Activated CD4-positive, alpha-beta T cell treated with anti-CD3 and anti-CD28 coated beads for 36 hours (primary cell): ENCODE measurements at regions of chr1 and their contacts with region 1.

Region 1: GRCh38 chr1:66924756-66925557 is at the starts of genes DNAI4 and MIER1:
- DNase-seq: peak; percentile 99
- ATAC-seq: peak; percentile 94
- H3K4me3 Mint-ChIP-seq: peak within 1 kb of the TSS; percentile 93
- H3K27ac Mint-ChIP-seq: peak within 1 kb of the TSS; percentile 92
- H3K4me1 Mint-ChIP-seq: peaks cover 52% of the 10 kb centered on the region
- H3K27me3 Mint-ChIP-seq: no peaks in the 10 kb centered on the region
- total RNA-seq, gene DNAI4: 0.87 to 3.6 TPM
- total RNA-seq, gene MIER1: 49.7 to 51.5 TPM

Region 2: GRCh38 chr1:65265651-65266351 is 1659.2 kb before region 1 on chr1:
- CTCF ChIA-PET with region 1: no interaction called
- POLR2A ChIA-PET with region 1: no interaction called
- intact Hi-C with region 1: loop called in 1 of 2 experiments (anchors 10 kb)
- DNase-seq: peak; percentile 49
- ATAC-seq: peak; percentile 31
- H3K4me3 Mint-ChIP-seq: peak overlapping the region; percentile 55
- H3K27ac Mint-ChIP-seq: peak overlapping the region; percentile 51
- H3K4me1 Mint-ChIP-seq: peaks cover 23% of the 10 kb centered on the region
- H3K27me3 Mint-ChIP-seq: peaks cover 27% of the 10 kb centered on the region

Region 3: DNA sequence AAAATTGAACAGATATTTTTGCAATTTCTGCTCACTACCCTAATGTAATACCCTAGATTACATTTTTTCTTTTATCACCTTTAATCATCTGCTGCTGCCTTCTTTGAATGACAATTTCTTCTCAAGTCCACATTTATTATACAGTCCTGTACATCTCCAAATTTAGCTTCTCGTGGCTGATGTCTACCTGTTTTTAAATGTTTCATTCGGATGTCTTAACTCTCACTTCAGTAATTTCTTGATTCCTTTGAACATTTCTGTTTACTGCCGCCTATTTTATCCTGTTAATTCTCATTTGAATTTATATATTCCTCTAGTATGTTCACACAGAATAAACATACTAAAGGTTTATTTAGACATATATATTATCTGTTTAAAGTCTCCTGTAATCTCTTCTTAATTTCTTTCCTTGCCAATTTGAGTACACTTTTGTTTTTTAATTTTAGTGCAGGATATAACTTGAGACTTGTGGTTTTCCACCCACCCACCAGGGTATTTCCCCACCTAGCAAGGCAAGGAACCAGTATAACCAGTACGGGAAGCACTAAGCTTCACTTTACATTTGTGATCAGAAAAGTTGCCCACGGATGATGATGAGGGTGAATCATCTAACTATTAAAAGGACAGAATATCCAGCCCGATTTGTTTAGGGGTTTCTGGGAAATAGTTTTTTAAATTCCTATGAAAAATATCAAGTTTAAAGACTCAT is 136.6 kb before region 1 on chr1:
- CTCF ChIA-PET with region 1: interaction called, 3 read pairs
- POLR2A ChIA-PET with region 1: no interaction called
- intact Hi-C with region 1: loop called (anchors 5 kb)
- DNase-seq: peak; percentile 81
- ATAC-seq: peak; percentile 99
- H3K4me3 Mint-ChIP-seq: peak overlapping the region; percentile 54
- H3K27ac Mint-ChIP-seq: peak overlapping the region; percentile 49
- H3K4me1 Mint-ChIP-seq: peaks cover 25% of the 10 kb centered on the region
- H3K27me3 Mint-ChIP-seq: no peaks in the 10 kb centered on the region

Region 4: GRCh38 chr1:66944330-66945274 is 19.6 kb after region 1 on chr1:
- CTCF ChIA-PET with region 1: no interaction called
- POLR2A ChIA-PET with region 1: no interaction called
- intact Hi-C with region 1: no loop called
- DNase-seq: no peak
- ATAC-seq: no peak
- H3K4me3 Mint-ChIP-seq: no peak overlapping the region
- H3K27ac Mint-ChIP-seq: no peak overlapping the region
- H3K4me1 Mint-ChIP-seq: peaks cover 51% of the 10 kb centered on the region
- H3K27me3 Mint-ChIP-seq: no peaks in the 10 kb centered on the region

Region 5: DNA sequence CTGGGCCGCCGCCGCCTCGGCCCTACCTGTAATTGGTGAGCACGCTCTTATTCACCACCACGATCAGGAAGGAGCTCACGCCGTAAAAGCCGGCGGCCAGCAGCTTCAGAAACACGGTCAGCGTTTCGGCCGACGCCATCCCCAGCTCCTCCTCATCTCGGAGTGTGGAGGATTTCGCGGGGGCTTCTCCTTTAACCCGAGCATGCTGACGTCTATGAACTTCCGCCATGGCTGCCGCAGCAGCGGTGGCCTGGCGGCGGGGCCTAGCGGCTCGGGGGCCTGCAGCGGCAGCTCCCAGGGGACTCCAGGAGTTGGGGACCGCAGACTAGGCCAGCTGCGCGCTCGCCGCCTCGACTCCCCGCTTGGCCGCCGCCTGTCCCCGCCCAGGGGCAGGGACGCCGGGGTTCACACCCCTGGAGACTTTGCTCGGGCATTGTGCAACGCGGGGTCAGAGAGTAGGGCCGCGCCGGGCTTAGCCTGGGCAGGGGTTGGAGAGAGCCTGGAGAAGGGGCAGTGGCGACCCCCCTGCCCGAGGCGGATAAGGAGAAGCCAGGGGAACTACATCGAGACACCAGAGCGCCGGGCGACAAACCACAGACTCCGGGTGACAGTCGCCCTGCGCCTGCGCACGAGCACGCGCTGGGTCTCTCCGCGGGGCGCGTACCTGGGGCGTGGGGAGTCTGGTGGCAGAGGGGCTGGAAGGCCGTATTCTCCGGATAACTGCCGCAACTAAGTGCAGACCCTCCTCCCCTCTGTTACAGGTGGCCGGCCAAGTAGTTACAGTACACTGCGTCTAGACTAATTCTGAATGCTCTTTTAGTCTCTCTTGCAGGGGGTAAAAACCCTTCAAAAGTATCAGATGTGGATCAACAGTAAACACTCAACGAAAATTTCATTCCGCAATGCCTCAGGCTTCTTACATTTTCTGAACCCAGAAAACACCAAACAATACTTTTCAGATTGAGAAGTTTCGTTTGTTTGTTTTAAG is 129.1 kb after region 1 on chr1 and contains the start of gene SLC35D1:
- CTCF ChIA-PET with region 1: no interaction called
- POLR2A ChIA-PET with region 1: no interaction called
- intact Hi-C with region 1: loop called (anchors 2 kb)
- DNase-seq: peak; percentile 77
- ATAC-seq: peak; percentile 79
- H3K4me3 Mint-ChIP-seq: peak within 1 kb of the TSS; percentile 79
- H3K27ac Mint-ChIP-seq: peak within 1 kb of the TSS; percentile 91
- H3K4me1 Mint-ChIP-seq: peaks cover 26% of the 10 kb centered on the region
- H3K27me3 Mint-ChIP-seq: peaks cover 5% of the 10 kb centered on the region
- total RNA-seq, gene SLC35D1: 8.7 to 10.3 TPM

Region 6: GRCh38 chr1:67174716-67175284 is 249.8 kb after region 1 on chr1:
- CTCF ChIA-PET with region 1: interaction called, 4 read pairs
- POLR2A ChIA-PET with region 1: no interaction called
- intact Hi-C with region 1: loop called in 1 of 2 experiments (anchors 5 kb)
- DNase-seq: peak; percentile 61
- ATAC-seq: peak; percentile 70
- H3K4me3 Mint-ChIP-seq: peak overlapping the region; percentile 25
- H3K27ac Mint-ChIP-seq: peak overlapping the region; percentile 94
- H3K4me1 Mint-ChIP-seq: peaks cover 68% of the 10 kb centered on the region
- H3K27me3 Mint-ChIP-seq: no peaks in the 10 kb centered on the region